ENCODE measurements at regions of chr5 and their contacts with region 1.

Region 1: GRCh38 chr5:142492781-142493281 is 168.0 kb upstream of the SPRY4 start:
- DNase-seq: peak in 1 of 2 donors; percentile 11
- ATAC-seq: peak in 7 of 8 donors; percentile 30 to 73 (median 42)
- H3K4me3 ChIP-seq: peak overlapping the region in 3 of 10 donors; percentile 4 to 17 (median 14)
- H3K27ac ChIP-seq: peak overlapping the region; percentile 14 to 83 (median 54)
- H3K4me1 ChIP-seq: peaks cover 2 to 58% (median 19%) of the 10 kb centered on the region in 9 donors
- H3K27me3 ChIP-seq: no peaks in the 10 kb centered on the region
- CTCF ChIP-seq: no peak

Region 2: DNA sequence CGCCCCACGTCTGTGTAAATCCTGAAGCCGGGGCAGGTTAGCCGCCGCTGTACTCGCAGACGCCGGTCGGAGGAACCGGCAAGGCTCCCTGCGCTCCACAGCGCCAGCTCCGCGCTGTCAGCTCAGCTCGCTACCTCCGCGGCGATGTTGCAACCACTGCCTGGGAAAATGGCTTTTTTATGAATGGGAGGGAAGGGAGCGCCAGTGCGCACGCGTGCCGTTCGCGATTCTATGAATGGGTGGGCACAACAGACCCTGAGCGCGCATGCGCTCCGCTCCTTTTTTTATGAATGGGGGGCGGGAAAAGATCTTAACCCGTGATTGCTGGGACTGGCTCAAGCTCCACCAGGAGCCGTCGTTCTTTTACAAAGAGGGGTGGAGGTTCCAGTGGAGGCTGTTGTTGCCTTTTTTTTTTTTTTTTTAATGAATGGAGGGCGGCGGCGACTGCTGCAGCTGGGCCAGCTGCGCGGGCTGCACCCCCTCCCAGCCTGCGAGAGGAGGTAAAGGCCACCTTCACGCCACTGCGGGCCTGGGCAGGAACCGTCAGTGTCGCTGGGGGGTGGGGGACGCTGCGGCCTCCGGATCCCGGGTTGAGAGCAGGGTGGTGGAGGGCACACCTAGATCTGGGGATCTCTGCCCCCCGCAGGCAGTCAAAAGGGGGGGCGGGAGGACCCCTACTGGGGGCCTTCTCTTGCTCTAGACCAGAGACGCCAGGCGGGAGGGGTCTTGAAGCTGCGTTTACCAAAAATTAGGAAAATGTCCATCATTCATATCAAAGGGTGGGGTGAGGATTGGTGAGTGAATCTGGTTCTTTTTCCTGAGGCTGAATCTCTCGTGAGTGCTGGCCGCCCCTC is 167.7 kb before region 1 on chr5 and contains the start of gene SPRY4:
- intact Hi-C with region 1: loop called in 2 of 10 experiments (anchors 2 to 5 kb)
- DNase-seq: peak; percentile 94 to 95
- ATAC-seq: peak; percentile 75 to 89 (median 81)
- H3K4me3 ChIP-seq: peak within 1 kb of the TSS; percentile 63 to 99 (median 79)
- H3K27ac ChIP-seq: peak within 1 kb of the TSS; percentile 88 to 97 (median 92)
- H3K4me1 ChIP-seq: peaks cover 13 to 73% (median 56%) of the 10 kb centered on the region in 9 donors
- H3K27me3 ChIP-seq: peaks cover 0 to 76% (median 0%) of the 10 kb centered on the region in 7 donors
- CTCF ChIP-seq: peak in 1 of 9 donors; percentile 4
- total RNA-seq, gene SPRY4: 7.4 to 13.7 (median 10.1) TPM

Region 3: GRCh38 chr5:142364251-142365145 is 128.3 kb before region 1 on chr5:
- intact Hi-C with region 1: no loop called
- DNase-seq: peak; percentile 64 to 75
- ATAC-seq: peak; percentile 15 to 66 (median 45)
- H3K4me3 ChIP-seq: peak overlapping the region in 5 of 10 donors; percentile 13 to 34 (median 29)
- H3K27ac ChIP-seq: peak overlapping the region in 9 of 10 donors; percentile 71 to 96 (median 88)
- H3K4me1 ChIP-seq: peaks cover 3 to 36% (median 23%) of the 10 kb centered on the region in 9 donors
- H3K27me3 ChIP-seq: peaks cover 0 to 29% (median 0%) of the 10 kb centered on the region in 7 donors
- CTCF ChIP-seq: no peak

Region 4: GRCh38 chr5:142403571-142403971 is 89.3 kb before region 1 on chr5:
- intact Hi-C with region 1: no loop called
- DNase-seq: no peak
- ATAC-seq: no peak
- H3K4me3 ChIP-seq: no peak overlapping the region
- H3K27ac ChIP-seq: peak overlapping the region in 5 of 10 donors; percentile 13 to 65 (median 52)
- H3K4me1 ChIP-seq: peaks cover 0 to 13% (median 0%) of the 10 kb centered on the region in 9 donors
- H3K27me3 ChIP-seq: no peaks in the 10 kb centered on the region
- CTCF ChIP-seq: no peak

Region 5: GRCh38 chr5:142420561-142421227 is 72.1 kb before region 1 on chr5:
- intact Hi-C with region 1: no loop called
- DNase-seq: no peak
- ATAC-seq: no peak
- H3K4me3 ChIP-seq: no peak overlapping the region
- H3K27ac ChIP-seq: no peak overlapping the region
- H3K4me1 ChIP-seq: peaks cover 0 to 41% (median 30%) of the 10 kb centered on the region in 9 donors
- H3K27me3 ChIP-seq: no peaks in the 10 kb centered on the region
- CTCF ChIP-seq: no peak

Region 6: GRCh38 chr5:142977363-142978051 is 484.7 kb after region 1 on chr5:
- intact Hi-C with region 1: no loop called
- DNase-seq: no peak
- ATAC-seq: peak in 5 of 8 donors; percentile 20 to 44 (median 28)
- H3K4me3 ChIP-seq: no peak overlapping the region
- H3K27ac ChIP-seq: peak overlapping the region in 3 of 10 donors; percentile 16 to 73 (median 24)
- H3K4me1 ChIP-seq: peaks cover 10 to 75% (median 35%) of the 10 kb centered on the region in 9 donors
- H3K27me3 ChIP-seq: no peaks in the 10 kb centered on the region
- CTCF ChIP-seq: no peak